Sciatic nerve (tissue), 2 donors: ENCODE measurements at regions of chr9 and their contacts with region 1.

Region 1: GRCh38 chr9:33721674-33722358 is 73.5 kb upstream of the PRSS3 start:
- DNase-seq: peak; percentile 92
- ATAC-seq: peak; percentile 86

Region 2: DNA sequence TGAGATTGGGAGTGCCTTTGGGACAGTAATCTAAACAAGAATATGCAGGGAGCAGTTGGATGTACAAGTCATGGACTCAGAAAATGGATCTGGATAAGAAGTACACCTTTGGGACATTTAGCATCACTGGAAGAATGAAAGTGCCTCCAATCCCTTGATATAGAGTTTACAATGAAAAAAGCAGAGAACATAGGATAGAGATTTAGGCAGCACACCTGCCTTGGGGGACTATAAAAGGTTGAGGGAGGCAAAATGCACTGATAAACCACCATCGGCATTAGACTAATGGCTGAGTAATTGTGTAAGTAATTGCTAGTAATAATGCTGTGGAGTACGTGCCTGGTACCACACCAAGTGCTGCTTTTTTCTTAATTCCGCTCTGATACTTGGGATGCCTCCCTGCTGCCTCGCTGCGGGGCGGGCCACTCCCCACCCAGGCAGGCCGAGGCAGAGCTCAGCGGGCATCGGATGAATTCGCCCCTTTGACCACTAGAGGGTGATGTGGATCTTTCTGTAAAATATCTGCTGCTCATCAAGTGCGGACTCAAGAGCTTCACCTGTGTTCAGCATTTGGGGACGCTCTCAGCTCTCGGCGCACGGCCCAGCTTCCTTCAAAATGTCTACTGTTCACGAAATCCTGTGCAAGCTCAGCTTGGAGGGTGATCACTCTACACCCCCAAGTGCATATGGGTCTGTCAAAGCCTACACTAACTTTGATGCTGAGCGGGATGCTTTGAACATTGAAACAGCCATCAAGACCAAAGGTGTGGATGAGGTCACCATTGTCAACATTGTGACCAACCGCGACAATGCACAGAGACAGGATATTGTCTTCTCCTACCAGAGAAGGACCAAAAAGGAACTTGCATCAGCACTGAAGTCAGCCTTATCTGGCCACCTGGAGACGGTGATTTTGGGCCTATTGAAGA is 97.9 kb before region 1 on chr9:
- intact Hi-C with region 1: loop called (anchors 5 kb)
- DNase-seq: no peak
- ATAC-seq: peak; percentile 85

Region 3: DNA sequence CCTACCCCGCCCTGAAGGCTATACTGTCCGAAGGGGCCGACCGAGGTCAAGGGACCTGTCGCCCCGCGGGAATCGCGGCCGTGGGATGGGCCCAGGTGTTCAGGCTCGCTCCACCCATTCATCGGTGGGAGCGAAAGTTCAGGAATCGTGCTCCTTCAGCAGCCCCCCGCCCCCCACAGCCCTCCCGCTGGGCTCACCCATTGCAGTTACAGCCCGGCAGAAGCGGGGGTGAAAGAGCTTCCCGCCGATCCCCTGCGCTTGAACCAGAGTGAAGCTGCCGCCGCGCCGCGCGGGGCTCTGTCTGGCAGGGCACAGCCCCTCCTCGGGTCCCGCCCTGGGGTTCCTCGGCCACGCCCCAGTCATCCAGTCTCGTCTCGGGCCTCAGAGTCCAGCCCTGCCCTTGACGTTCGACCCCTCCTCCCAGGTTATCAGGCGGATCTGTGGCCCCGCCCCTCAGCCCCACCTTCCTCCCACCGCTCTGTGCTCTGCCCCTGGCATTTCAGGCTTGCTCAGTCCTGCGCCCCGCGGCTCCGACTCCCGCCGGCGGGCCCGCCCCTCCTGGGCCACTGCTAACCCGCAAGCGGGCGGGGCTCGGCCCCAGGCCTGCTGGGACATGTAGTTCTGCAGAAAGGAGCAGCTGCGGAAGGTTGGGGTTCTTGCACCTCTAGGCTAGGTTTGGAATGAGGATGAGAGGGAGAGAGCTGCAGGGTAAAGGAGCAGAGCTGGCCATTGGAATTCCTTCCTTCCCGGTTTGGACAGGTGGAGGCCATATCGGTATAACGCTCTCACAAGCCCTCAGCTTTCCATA is 655.0 kb after region 1 on chr9 and contains the start of gene MYORG:
- intact Hi-C with region 1: no loop called
- DNase-seq: peak; percentile 94
- ATAC-seq: peak; percentile 88
- total RNA-seq, gene MYORG: 6.6 TPM